ENCODE measurements at regions of chr16 and their contacts with region 1.

Region 1: GRCh38 chr16:57475711-57476339 is 10.5 kb downstream of the DOK4 start:
- DNase-seq: peak; percentile 83
- H3K4me3 ChIP-seq: no peak overlapping the region; a peak in 1 of 4 replicates
- H3K27ac ChIP-seq: peak overlapping the region in 1 of 2 experiments; percentile 90; a peak in 2 of 4 replicates
- H3K4me1 ChIP-seq: peaks cover 14 to 97% of the 10 kb centered on the region in 2 experiments
- H3K27me3 ChIP-seq: no peaks in the 10 kb centered on the region
- CTCF ChIP-seq: peak; percentile 49
- EP300 ChIP-seq: no peak
- RAD21 ChIP-seq: peak; percentile 47

Region 2: DNA sequence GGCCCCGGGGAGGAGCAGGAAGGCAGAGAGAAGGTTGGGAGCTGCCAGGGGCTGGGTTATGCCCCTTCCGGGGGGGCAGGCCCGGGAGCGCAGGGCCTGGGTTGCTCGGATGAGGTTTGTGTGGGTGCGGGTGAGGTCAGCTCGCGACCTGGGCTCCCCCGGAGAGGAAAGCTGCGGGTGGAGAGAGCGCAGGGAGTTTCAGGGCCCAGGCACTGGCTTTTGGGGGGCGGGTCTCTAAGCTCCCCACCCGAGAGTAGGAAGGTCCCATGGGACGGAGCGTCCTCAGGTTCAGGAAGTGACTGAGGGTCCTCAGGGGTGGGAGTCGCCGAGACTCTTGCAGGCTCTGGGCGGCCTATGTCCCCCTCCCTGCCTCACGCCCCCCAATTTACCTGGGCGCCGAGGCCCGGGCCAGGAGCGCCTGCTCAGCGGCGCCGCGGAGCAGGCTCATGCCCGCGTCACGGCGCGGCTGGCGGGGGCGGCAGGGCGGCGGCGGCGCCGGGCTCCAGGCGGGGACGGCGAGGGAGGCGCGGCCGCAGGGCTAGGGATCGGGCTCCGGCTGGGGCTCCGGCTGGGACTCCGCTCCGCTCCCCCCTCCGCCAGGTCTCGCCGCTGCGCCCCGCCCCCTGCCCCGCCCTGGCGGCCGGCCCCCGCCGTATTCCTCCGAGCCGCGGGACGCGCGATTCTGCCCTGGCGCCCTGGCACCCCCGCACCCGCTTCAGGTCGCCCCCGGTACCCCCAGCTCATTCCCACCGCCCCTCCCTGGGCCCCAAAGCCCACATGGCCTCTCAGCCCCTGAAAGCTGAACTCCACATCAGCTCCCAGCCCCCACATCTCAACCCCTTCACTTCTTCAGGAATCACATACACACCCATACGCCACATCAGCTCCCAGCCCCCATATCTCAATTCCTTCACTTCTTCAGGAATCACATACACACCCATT is 10.4 kb after region 1 on chr16 and contains the start of gene DOK4:
- CTCF ChIA-PET with region 1: interaction called, 9 read pairs
- POLR2A ChIA-PET with region 1: interaction called, 52 read pairs
- DNase-seq: peak; percentile 98
- H3K4me3 ChIP-seq: peak within 1 kb of the TSS; percentile 67 to 83
- H3K27ac ChIP-seq: peak within 1 kb of the TSS in 1 of 2 experiments; percentile 94; a peak in 2 of 4 replicates
- H3K4me1 ChIP-seq: peaks cover 0 to 42% of the 10 kb centered on the region in 2 experiments; a peak in 1 of 4 replicates
- H3K27me3 ChIP-seq: no peaks in the 10 kb centered on the region
- CTCF ChIP-seq: no peak
- EP300 ChIP-seq: no peak
- RAD21 ChIP-seq: no peak
- polyA plus RNA-seq, gene DOK4: 28.4 and 36.9 TPM in 2 replicates